Calu3 (cell line): ENCODE measurements at regions of chr3 and their contacts with region 1.

Region 1: DNA sequence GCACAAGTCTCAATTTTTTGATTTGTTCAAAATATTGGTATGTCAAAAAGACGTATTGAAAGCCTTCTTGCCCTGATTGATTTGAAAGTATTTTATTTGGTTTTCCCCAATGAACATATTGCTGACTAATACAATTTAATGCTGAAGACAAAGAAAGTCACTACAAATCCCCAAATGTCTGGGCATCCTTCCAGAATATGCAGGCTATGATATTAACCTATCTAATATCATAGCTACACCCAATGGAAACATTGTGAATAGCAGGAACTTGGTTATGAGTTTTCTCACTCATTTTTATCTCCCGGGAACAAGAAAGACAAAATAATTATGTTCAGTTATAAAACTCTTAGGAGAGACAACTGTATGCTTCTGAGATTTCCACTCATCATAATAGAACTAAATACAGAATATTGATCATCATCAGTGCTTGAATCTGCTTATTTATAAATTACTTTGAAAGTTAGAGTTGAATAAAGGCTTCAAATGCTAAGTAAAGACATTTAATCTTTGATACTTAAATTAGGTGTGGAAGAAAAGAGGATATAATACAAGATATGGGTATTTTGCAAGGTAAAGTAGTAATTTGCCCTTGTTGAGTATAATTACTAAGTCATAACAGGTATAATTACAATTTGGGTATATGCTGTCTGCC is 483.9 kb downstream of the RBMS3 start:
- DNase-seq: peak; percentile 23
- H3K4me3 Mint-ChIP-seq: no peak overlapping the region
- H3K27ac Mint-ChIP-seq: no peak overlapping the region
- H3K4me1 Mint-ChIP-seq: peaks cover 17% of the 10 kb centered on the region
- H3K27me3 Mint-ChIP-seq: no peaks in the 10 kb centered on the region
- CTCF ChIP-seq: no peak

Region 2: GRCh38 chr3:28667646-28668621 is 1096.8 kb before region 1 on chr3:
- CTCF ChIA-PET with region 1: interaction called, 3 read pairs
- intact Hi-C with region 1: loop called (anchors 10 kb)
- DNase-seq: peak; percentile 63
- H3K4me3 Mint-ChIP-seq: no peak overlapping the region
- H3K27ac Mint-ChIP-seq: no peak overlapping the region
- H3K4me1 Mint-ChIP-seq: no peaks in the 10 kb centered on the region
- H3K27me3 Mint-ChIP-seq: no peaks in the 10 kb centered on the region
- CTCF ChIP-seq: peak; percentile 48

Region 3: GRCh38 chr3:28791713-28792255 is 972.9 kb before region 1 on chr3:
- CTCF ChIA-PET with region 1: no interaction called
- intact Hi-C with region 1: no loop called
- DNase-seq: no peak
- H3K4me3 Mint-ChIP-seq: no peak overlapping the region
- H3K27ac Mint-ChIP-seq: no peak overlapping the region
- H3K4me1 Mint-ChIP-seq: no peaks in the 10 kb centered on the region
- H3K27me3 Mint-ChIP-seq: no peaks in the 10 kb centered on the region
- CTCF ChIP-seq: no peak

Region 4: GRCh38 chr3:28916713-28917499 is 847.8 kb before region 1 on chr3:
- CTCF ChIA-PET with region 1: interaction called, 4 read pairs
- intact Hi-C with region 1: loop called (anchors 5 kb)
- DNase-seq: peak; percentile 2
- H3K4me3 Mint-ChIP-seq: no peak overlapping the region
- H3K27ac Mint-ChIP-seq: no peak overlapping the region
- H3K4me1 Mint-ChIP-seq: no peaks in the 10 kb centered on the region
- H3K27me3 Mint-ChIP-seq: no peaks in the 10 kb centered on the region
- CTCF ChIP-seq: no peak

Region 5: DNA sequence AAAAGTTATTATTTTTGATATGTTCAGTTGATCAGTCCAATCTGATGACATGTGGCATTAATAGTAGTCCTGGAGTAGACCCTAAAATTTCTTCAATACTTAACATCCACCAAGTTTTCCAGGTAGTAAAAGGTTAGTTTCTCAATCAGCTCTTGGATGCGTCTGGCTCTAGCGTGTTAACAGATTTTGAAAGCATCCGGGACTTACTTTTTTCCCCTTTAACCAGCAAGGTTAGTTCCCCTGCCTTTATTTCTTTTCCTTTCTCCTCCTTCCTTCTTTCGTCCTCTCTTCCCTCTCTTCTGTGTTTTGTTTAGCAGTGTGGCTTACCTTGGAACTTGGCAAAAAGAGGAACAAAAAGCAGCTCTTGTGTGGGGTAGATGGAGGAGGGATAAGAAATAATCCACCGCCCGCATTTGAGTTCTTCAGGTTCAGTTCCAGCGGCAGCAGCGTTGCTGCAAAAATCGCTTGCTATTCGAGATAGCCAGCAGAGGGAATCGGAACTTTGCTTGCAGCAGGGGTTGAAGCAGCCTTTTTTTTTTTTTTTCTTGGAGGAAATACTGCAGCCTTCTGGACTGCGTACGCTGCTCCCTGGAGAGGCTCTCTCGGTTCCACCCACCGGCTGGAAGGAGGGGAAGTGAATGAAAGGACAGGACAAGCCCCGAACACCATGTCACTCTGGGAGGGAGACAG is 484.2 kb before region 1 on chr3 and contains the start of gene RBMS3:
- CTCF ChIA-PET with region 1: no interaction called
- intact Hi-C with region 1: loop called (anchors 2 kb)
- DNase-seq: peak; percentile 66
- H3K4me3 Mint-ChIP-seq: peak within 1 kb of the TSS; percentile 64
- H3K27ac Mint-ChIP-seq: peak within 1 kb of the TSS; percentile 53
- H3K4me1 Mint-ChIP-seq: peaks cover 32% of the 10 kb centered on the region
- H3K27me3 Mint-ChIP-seq: no peaks in the 10 kb centered on the region
- CTCF ChIP-seq: no peak
- total RNA-seq, gene RBMS3: 1.3 TPM in 2 replicates

Region 6: DNA sequence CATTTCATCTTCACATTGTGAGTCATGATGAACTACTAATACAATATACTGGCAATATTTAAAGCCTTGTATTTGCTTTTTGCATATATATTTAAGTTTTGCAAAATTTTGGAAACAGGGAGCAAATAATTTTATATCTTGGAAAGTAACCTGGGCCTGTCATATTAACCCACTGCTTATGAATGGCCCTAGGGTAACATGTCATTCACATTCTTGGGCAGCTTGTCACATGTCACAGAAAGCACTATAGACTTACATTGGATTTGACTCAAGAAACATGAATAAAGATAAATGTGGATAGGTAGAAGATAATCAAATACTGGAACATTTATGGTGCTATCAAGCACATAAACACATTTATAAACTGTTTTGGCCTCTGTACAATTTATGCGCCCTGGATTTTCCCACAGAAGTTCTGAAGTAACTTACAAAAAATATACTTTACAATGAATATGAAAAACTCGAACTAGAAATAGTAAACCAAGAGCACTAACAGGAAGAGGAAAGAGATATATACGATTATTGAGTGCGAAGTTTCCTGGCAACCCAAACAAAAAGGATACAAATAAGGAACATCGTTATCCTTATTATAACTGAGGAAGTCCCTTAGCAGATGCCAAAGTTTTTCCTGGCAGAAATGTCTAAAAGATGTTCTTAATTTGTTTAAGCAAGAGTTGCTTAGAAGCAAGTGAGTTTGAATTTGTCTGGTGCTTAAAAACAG is 226.7 kb before region 1 on chr3:
- CTCF ChIA-PET with region 1: no interaction called
- intact Hi-C with region 1: loop called (anchors 10 kb)
- DNase-seq: no peak
- H3K4me3 Mint-ChIP-seq: no peak overlapping the region
- H3K27ac Mint-ChIP-seq: no peak overlapping the region
- H3K4me1 Mint-ChIP-seq: no peaks in the 10 kb centered on the region
- H3K27me3 Mint-ChIP-seq: no peaks in the 10 kb centered on the region
- CTCF ChIP-seq: no peak